Activated CD4-positive, alpha-beta memory T cell treated with anti-CD3 and anti-CD28 coated beads for 36 hours (primary cell): ENCODE measurements at regions of chr2 and their contacts with region 1.

Region 1: DNA sequence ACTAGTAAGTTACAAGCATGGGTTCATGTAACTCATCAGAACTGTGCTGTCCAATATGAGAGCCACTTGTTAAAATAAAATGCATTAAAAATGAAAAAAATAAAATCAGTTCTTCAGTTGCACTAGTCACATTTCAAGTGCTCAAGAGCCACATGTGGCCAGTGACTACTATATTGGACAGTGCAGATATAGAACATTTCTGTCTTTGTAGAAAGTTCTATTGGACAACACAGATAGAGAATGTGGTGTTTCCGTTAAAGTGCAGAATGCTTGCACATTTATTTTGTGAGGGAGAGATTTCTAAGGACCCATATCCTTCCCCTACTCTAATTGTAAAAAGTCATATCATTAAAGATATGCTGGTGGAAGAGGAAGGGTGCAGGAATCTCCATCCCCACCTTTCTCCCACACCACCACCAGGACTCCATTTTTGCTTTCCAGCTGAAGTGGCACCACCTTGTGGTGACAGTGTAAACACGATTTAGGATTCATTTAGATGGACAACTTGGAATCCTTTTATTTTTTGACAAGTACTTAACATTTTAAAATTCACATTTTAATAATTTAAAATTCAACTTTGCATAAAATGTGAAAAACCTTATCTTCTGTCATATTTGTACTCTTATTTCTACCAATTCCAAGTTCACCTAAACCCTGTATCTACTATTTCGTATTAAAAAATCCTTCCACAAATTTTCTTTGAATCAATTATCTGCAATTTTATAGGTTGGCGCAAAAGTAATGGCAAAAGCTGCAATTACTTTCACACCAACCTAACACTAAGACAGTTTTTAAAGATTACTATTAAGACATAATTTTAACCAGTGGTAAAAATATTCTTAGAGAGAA is 9.4 kb upstream of the CD302 start:
- DNase-seq: peak; percentile 16
- H3K4me3 Mint-ChIP-seq: no peak overlapping the region
- H3K27ac Mint-ChIP-seq: no peak overlapping the region
- H3K4me1 Mint-ChIP-seq: peaks cover 2% of the 10 kb centered on the region
- H3K27me3 Mint-ChIP-seq: no peaks in the 10 kb centered on the region

Region 2: GRCh38 chr2:158889135-158889853 is 918.1 kb before region 1 on chr2:
- CTCF ChIA-PET with region 1: no interaction called
- POLR2A ChIA-PET with region 1: no interaction called
- intact Hi-C with region 1: loop called (anchors 5 kb)
- DNase-seq: no peak
- H3K4me3 Mint-ChIP-seq: no peak overlapping the region
- H3K27ac Mint-ChIP-seq: no peak overlapping the region
- H3K4me1 Mint-ChIP-seq: peaks cover 10% of the 10 kb centered on the region
- H3K27me3 Mint-ChIP-seq: peaks cover 9% of the 10 kb centered on the region

Region 3: DNA sequence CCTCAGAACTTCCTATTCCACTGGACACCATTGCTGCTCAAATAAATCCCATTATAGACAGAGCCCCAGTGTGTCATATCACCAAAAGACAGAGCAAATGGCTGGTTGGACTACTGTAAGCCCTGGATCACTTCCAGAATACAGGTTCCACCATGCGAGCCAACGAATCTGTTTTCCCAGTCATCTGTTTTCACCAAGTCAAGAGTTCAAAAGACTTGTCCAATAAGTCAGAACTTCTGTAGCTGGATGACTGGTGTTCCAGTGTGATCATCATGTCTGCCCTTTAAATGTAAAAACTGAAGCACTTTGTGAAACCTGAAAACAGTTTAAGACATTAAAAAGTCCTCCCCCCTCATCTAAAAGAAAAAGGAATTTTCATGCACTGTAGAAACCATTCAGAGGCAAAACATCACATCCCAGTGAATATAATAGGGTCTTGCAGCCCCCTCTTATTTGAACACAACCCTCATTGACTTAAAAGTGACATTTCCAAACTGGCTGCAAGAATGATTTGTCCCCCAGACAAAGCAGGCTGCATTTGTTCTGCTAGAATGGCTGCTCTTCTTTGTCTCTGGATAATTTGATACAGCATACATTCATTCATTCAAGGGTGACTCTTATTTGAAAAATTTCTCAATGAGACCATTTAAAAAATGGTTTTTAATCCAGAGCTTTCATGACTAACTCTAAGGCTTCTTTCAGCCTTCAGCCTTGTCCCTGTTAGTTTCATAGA is 903.5 kb before region 1 on chr2:
- CTCF ChIA-PET with region 1: interaction called, 4 read pairs
- POLR2A ChIA-PET with region 1: no interaction called
- intact Hi-C with region 1: loop called (anchors 5 kb)
- DNase-seq: no peak
- H3K4me3 Mint-ChIP-seq: no peak overlapping the region
- H3K27ac Mint-ChIP-seq: no peak overlapping the region
- H3K4me1 Mint-ChIP-seq: no peaks in the 10 kb centered on the region
- H3K27me3 Mint-ChIP-seq: no peaks in the 10 kb centered on the region

Region 4: DNA sequence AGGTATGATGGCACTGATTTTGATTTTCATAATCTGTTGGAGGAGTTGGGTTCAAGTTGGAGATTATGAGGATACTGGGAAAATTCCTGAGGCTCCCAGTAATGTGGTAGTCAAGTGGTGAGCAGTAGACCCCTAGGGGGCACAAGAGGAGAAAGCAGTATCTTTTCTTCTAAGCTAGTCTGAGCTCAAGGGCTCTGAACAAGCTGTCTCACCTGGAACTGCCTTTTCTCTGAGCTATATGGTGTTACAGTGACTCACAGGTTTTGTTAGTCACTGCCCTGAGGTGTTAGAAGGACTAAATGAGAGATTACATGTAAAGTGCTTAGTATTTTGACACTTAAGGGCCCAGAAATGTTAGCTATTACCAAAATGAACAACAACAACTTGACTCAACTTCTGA is 51.6 kb before region 1 on chr2:
- CTCF ChIA-PET with region 1: interaction called, 3 read pairs
- POLR2A ChIA-PET with region 1: no interaction called
- intact Hi-C with region 1: loop called (anchors 1 kb)
- DNase-seq: peak; percentile 22
- H3K4me3 Mint-ChIP-seq: no peak overlapping the region
- H3K27ac Mint-ChIP-seq: no peak overlapping the region
- H3K4me1 Mint-ChIP-seq: peaks cover 8% of the 10 kb centered on the region
- H3K27me3 Mint-ChIP-seq: no peaks in the 10 kb centered on the region

Region 5: GRCh38 chr2:159855557-159856061 is 48.2 kb after region 1 on chr2:
- CTCF ChIA-PET with region 1: no interaction called
- POLR2A ChIA-PET with region 1: no interaction called
- intact Hi-C with region 1: loop called (anchors 1 kb)
- DNase-seq: no peak
- H3K4me3 Mint-ChIP-seq: no peak overlapping the region
- H3K27ac Mint-ChIP-seq: no peak overlapping the region
- H3K4me1 Mint-ChIP-seq: peaks cover 8% of the 10 kb centered on the region
- H3K27me3 Mint-ChIP-seq: no peaks in the 10 kb centered on the region